B cell (primary cell): ENCODE measurements at regions of chr2 and their contacts with region 1.

Region 1: DNA sequence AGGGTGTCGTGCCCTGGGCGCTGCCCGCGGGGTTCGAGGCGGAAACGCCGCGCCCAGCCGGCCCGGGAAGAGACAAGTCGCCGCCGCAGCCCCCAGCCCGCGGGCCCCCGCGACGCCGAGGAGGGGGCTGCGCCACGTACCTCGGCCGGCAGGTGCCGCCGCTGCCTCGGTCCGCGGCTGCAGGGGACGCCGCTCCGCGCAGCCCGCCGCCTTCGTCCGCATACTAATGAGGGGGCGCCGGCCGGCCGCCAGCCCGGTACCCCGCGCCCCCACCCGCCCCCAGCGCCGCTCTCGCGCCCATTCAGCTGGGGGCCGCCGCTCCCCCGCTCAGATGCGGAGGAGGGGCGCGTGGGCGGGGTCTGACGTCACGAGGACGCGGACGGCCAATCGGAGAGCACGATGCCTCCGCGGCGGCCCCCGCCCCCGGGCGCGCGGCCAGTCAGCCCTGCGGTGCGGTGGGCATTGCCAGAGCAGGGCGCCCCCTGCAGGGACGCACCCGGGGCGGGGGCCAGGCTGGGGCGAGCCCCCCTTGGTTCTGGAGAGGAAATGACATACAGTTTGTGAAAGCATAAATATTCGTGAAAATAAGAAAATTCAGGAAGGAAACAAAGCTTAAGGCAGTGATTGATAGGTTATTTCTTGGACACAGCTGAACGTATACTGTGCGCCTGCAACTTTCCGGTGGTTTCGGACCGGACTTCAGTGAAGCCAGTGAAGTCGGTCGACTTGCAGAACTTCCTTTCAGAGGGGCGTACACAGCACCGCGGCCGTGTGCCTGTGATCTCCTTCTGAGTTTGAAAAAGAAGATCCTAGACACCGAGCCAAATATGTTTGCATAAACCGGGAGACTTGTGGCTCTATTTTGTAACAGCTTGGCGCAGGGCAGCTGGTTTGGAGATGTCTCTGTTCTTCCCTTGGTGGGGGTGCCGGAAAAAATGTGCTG is at the start of gene ST3GAL5:
- DNase-seq: peak; percentile 95
- ATAC-seq: peak; percentile 87
- H3K4me3 ChIP-seq: peak within 1 kb of the TSS; percentile 57 to 95 (median 83)
- H3K4me3 Mint-ChIP-seq: peak within 1 kb of the TSS; percentile 98
- H3K27ac ChIP-seq: peak within 1 kb of the TSS; percentile 71 to 72
- H3K27ac Mint-ChIP-seq: peak within 1 kb of the TSS; percentile 94
- H3K4me1 ChIP-seq: peaks cover 43 to 62% of the 10 kb centered on the region in 2 donors
- H3K4me1 Mint-ChIP-seq: peaks cover 75% of the 10 kb centered on the region
- H3K27me3 ChIP-seq: no peaks in the 10 kb centered on the region
- H3K27me3 Mint-ChIP-seq: no peaks in the 10 kb centered on the region
- CTCF ChIP-seq: peak; percentile 84
- total RNA-seq, gene ST3GAL5: 90.3 and 94.3 TPM in 2 replicates

Region 2: GRCh38 chr2:85826990-85827878 is 61.7 kb before region 1 on chr2:
- CTCF ChIA-PET with region 1: interaction called, 250 read pairs
- POLR2A ChIA-PET with region 1: interaction called, 13 read pairs
- intact Hi-C with region 1: loop called (anchors 1 kb)
- DNase-seq: peak; percentile 88
- ATAC-seq: peak; percentile 99
- H3K4me3 ChIP-seq: peak overlapping the region in 2 of 5 experiments; percentile 16 to 18
- H3K4me3 Mint-ChIP-seq: peak overlapping the region; percentile 59
- H3K27ac ChIP-seq: no peak overlapping the region
- H3K27ac Mint-ChIP-seq: peak overlapping the region; percentile 54
- H3K4me1 ChIP-seq: peaks cover 5 to 15% of the 10 kb centered on the region in 2 donors
- H3K4me1 Mint-ChIP-seq: peaks cover 25% of the 10 kb centered on the region
- H3K27me3 ChIP-seq: no peaks in the 10 kb centered on the region
- H3K27me3 Mint-ChIP-seq: peaks cover 4% of the 10 kb centered on the region
- CTCF ChIP-seq: peak; percentile 88

Region 3: DNA sequence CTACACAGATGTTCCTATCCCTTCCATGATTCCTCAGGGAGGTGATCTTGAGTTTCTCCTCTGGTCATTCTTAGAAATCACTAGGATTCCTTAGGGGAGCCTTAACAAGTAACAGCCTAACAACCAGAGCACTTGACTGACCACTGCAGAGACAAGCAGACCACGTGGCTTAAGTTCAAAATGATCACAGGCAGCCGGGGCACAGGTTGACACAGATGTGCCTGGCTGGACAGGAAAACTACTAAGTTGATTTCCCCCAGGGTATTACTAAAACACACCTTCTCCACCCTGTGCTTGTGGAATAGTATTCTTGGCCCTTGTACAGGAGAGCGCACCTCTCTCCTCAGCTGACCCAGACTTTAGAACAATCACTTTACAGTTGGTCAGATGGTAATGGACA is 30.1 kb before region 1 on chr2:
- CTCF ChIA-PET with region 1: interaction called, 68 read pairs
- POLR2A ChIA-PET with region 1: interaction called, 25 read pairs
- intact Hi-C with region 1: no loop called
- DNase-seq: no peak
- ATAC-seq: no peak
- H3K4me3 ChIP-seq: no peak overlapping the region
- H3K4me3 Mint-ChIP-seq: no peak overlapping the region
- H3K27ac ChIP-seq: no peak overlapping the region
- H3K27ac Mint-ChIP-seq: peak overlapping the region; percentile 28
- H3K4me1 ChIP-seq: peaks cover 43 to 46% of the 10 kb centered on the region in 2 donors
- H3K4me1 Mint-ChIP-seq: peaks cover 74% of the 10 kb centered on the region
- H3K27me3 ChIP-seq: no peaks in the 10 kb centered on the region
- H3K27me3 Mint-ChIP-seq: no peaks in the 10 kb centered on the region
- CTCF ChIP-seq: no peak

Region 4: GRCh38 chr2:85992611-85993010 is 103.7 kb after region 1 on chr2:
- CTCF ChIA-PET with region 1: interaction called, 11 read pairs
- POLR2A ChIA-PET with region 1: interaction called, 10 read pairs
- intact Hi-C with region 1: no loop called
- DNase-seq: no peak
- ATAC-seq: no peak
- H3K4me3 ChIP-seq: no peak overlapping the region
- H3K4me3 Mint-ChIP-seq: no peak overlapping the region
- H3K27ac ChIP-seq: no peak overlapping the region
- H3K27ac Mint-ChIP-seq: no peak overlapping the region
- H3K4me1 ChIP-seq: peaks cover 40 to 49% of the 10 kb centered on the region in 2 donors
- H3K4me1 Mint-ChIP-seq: peaks cover 48% of the 10 kb centered on the region
- H3K27me3 ChIP-seq: no peaks in the 10 kb centered on the region
- H3K27me3 Mint-ChIP-seq: no peaks in the 10 kb centered on the region
- CTCF ChIP-seq: no peak

Region 5: DNA sequence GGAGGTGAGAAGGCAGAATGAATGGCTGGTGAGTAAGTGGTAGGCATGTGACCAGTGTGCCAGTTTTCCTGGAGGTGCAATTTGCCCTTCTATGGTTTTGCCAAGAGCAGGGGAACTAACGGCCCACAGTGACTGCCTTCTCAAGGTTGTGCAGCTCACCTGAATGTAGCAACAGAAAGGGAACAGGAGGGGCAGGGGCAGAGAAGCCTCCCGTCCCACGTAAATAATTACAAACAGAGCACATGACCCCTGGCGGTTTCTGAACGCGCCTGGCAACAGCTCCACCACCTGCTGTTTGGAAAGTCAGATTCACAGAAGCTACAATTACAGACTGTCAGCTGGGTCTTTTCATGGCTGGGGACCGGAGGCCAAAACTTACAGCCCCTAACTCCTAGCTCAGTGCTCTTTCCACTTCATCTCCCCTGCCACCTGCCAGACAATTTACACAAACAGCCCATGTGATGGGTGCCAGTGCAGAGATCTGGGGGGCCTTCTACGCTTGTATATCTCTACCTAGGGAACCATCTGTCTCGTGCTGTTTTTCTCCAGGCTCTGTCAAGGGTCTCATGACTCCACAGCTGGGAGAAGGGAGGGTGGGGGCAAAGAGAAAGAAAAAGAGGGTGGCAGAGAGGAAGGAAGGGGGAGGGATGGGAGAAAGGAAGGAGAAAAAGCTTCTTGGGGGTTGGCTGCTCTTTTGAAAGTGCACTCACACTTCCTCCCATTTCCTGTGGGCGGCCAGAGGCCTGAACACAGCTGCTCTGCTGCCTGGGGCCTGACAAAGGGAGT is 147.1 kb after region 1 on chr2:
- CTCF ChIA-PET with region 1: interaction called, 167 read pairs
- POLR2A ChIA-PET with region 1: interaction called, 45 read pairs
- intact Hi-C with region 1: loop called (anchors 1 kb)
- DNase-seq: peak; percentile 93
- ATAC-seq: peak; percentile 71
- H3K4me3 ChIP-seq: peak overlapping the region; percentile 16 to 64 (median 36)
- H3K4me3 Mint-ChIP-seq: peak overlapping the region; percentile 87
- H3K27ac ChIP-seq: peak overlapping the region; percentile 98 to 99
- H3K27ac Mint-ChIP-seq: peak overlapping the region; percentile 100
- H3K4me1 ChIP-seq: peaks cover 54 to 63% of the 10 kb centered on the region in 2 donors
- H3K4me1 Mint-ChIP-seq: peaks cover 66% of the 10 kb centered on the region
- H3K27me3 ChIP-seq: no peaks in the 10 kb centered on the region
- H3K27me3 Mint-ChIP-seq: no peaks in the 10 kb centered on the region
- CTCF ChIP-seq: peak; percentile 63

Region 6: GRCh38 chr2:86105252-86105968 is 216.5 kb after region 1 on chr2 and contains the start of gene POLR1A:
- CTCF ChIA-PET with region 1: interaction called, 3 read pairs
- POLR2A ChIA-PET with region 1: no interaction called
- intact Hi-C with region 1: loop called (anchors 1 kb)
- DNase-seq: peak; percentile 95
- ATAC-seq: peak; percentile 76
- H3K4me3 ChIP-seq: peak within 1 kb of the TSS; percentile 88 to 96 (median 89)
- H3K4me3 Mint-ChIP-seq: peak within 1 kb of the TSS; percentile 93
- H3K27ac ChIP-seq: peak within 1 kb of the TSS; percentile 74 to 92
- H3K27ac Mint-ChIP-seq: peak within 1 kb of the TSS; percentile 95
- H3K4me1 ChIP-seq: peaks cover 16 to 22% of the 10 kb centered on the region in 2 donors
- H3K4me1 Mint-ChIP-seq: peaks cover 50% of the 10 kb centered on the region
- H3K27me3 ChIP-seq: no peaks in the 10 kb centered on the region
- H3K27me3 Mint-ChIP-seq: no peaks in the 10 kb centered on the region
- CTCF ChIP-seq: no peak
- total RNA-seq, gene POLR1A: 32.7 and 36.8 TPM in 2 replicates

Region 7: GRCh38 chr2:86221066-86221684 is 332.2 kb after region 1 on chr2:
- CTCF ChIA-PET with region 1: no interaction called
- POLR2A ChIA-PET with region 1: no interaction called
- intact Hi-C with region 1: no loop called
- DNase-seq: peak; percentile 80
- ATAC-seq: peak; percentile 77
- H3K4me3 ChIP-seq: no peak overlapping the region
- H3K4me3 Mint-ChIP-seq: no peak overlapping the region
- H3K27ac ChIP-seq: no peak overlapping the region
- H3K27ac Mint-ChIP-seq: no peak overlapping the region
- H3K4me1 ChIP-seq: peaks cover 16 to 21% of the 10 kb centered on the region in 2 donors
- H3K4me1 Mint-ChIP-seq: peaks cover 27% of the 10 kb centered on the region
- H3K27me3 ChIP-seq: no peaks in the 10 kb centered on the region
- H3K27me3 Mint-ChIP-seq: no peaks in the 10 kb centered on the region
- CTCF ChIP-seq: peak; percentile 98

Region 8: GRCh38 chr2:86368161-86368824 is 479.3 kb after region 1 on chr2:
- CTCF ChIA-PET with region 1: no interaction called
- POLR2A ChIA-PET with region 1: no interaction called
- intact Hi-C with region 1: no loop called
- DNase-seq: peak; percentile 70
- ATAC-seq: peak; percentile 81
- H3K4me3 ChIP-seq: peak overlapping the region in 1 of 5 experiments; percentile 24
- H3K4me3 Mint-ChIP-seq: peak overlapping the region; percentile 48
- H3K27ac ChIP-seq: no peak overlapping the region
- H3K27ac Mint-ChIP-seq: no peak overlapping the region
- H3K4me1 ChIP-seq: peaks cover 3 to 16% of the 10 kb centered on the region in 2 donors
- H3K4me1 Mint-ChIP-seq: peaks cover 14% of the 10 kb centered on the region
- H3K27me3 ChIP-seq: no peaks in the 10 kb centered on the region
- H3K27me3 Mint-ChIP-seq: no peaks in the 10 kb centered on the region
- CTCF ChIP-seq: peak; percentile 63

Region 9: DNA sequence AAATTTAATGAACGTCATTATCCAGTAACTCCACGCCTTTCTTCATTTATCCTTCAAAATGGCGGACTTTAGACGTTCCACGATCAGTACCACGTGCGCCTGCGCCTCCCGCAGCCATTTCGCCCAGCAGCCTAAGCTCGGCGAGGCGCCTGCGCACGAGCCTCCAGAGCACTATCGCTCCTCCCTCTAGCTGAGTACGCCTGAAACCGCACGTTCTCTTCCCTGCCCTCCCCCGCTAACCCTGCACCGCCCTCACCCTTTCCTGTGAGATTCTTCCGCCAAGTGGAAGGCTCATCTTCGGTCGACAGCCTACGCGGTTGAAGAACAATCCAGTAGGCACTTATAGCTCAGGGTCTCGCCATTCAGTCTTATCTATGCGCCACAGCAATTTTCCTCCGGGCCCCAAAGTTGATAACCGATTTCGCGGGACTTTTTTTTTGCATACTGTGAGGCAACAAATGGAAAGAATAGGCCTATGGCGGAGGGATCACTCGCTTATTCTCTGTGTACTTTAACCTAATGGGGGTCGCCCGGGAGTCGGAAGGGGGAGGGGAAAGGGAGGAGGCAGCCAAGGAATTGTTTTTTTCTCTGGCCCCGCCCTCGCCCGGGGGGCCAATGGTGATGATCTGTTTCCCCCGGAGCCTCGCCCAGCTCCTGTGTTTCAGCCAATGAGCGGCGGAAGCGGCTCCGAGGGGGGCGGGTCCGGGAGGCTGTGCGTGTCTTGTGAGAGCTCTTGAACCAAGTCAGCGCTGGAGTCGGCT is 551.9 kb after region 1 on chr2 and contains the start of gene KDM3A:
- CTCF ChIA-PET with region 1: no interaction called
- POLR2A ChIA-PET with region 1: no interaction called
- intact Hi-C with region 1: loop called (anchors 2 kb)
- DNase-seq: peak; percentile 99
- ATAC-seq: peak; percentile 81
- H3K4me3 ChIP-seq: peak within 1 kb of the TSS; percentile 81 to 98 (median 84)
- H3K4me3 Mint-ChIP-seq: peak within 1 kb of the TSS; percentile 97
- H3K27ac ChIP-seq: peak within 1 kb of the TSS; percentile 89 to 92
- H3K27ac Mint-ChIP-seq: peak within 1 kb of the TSS; percentile 99
- H3K4me1 ChIP-seq: peaks cover 23 to 26% of the 10 kb centered on the region in 2 donors
- H3K4me1 Mint-ChIP-seq: peaks cover 41% of the 10 kb centered on the region
- H3K27me3 ChIP-seq: peaks cover 0 to 3% (median 0%) of the 10 kb centered on the region in 4 experiments
- H3K27me3 Mint-ChIP-seq: peaks cover 7% of the 10 kb centered on the region
- CTCF ChIP-seq: no peak
- total RNA-seq, gene KDM3A: 99.2 and 107 TPM in 2 replicates